ENCODE measurements at regions of chr7 and their contacts with region 1.

Region 1: DNA sequence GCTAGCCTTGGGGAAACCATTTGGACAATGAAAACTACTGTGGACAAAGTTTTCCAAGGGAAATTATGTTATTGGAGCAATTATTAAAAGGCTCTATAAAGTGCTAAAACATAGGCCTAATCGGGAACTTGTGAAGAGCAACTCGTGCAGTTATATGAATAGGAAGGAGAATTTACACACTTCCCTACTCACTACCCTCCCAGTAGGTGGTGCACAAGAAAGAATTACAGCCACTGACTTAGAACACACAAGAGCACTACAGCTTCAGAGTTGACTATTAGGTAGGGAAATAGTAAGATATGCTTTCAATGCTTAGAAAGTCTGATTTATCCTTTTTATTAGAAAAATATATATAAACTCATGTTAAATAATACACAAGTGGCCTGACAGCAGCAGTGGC is 47.2 kb downstream of the GSAP start:
- DNase-seq: peak; percentile 41
- ATAC-seq: peak; percentile 71
- H3K4me3 ChIP-seq: no peak overlapping the region
- H3K27ac ChIP-seq: no peak overlapping the region
- H3K4me1 ChIP-seq: no peaks in the 10 kb centered on the region
- H3K27me3 ChIP-seq: no peaks in the 10 kb centered on the region
- CTCF ChIP-seq: peak; percentile 54

Region 2: GRCh38 chr7:77606562-77606961 is 237.6 kb after region 1 on chr7:
- CTCF ChIA-PET with region 1: no interaction called
- POLR2A ChIA-PET with region 1: no interaction called
- intact Hi-C with region 1: loop called (anchors 10 kb)
- DNase-seq: peak; percentile 7
- ATAC-seq: peak; percentile 49; the same call in 1 of the 2 replicates
- H3K4me3 ChIP-seq: no peak overlapping the region
- H3K27ac ChIP-seq: no peak overlapping the region
- H3K4me1 ChIP-seq: peaks cover 14% of the 10 kb centered on the region
- H3K27me3 ChIP-seq: no peaks in the 10 kb centered on the region
- CTCF ChIP-seq: no peak

Measured in PC-3 (cell line).